ENCODE measurements at regions of chr6 and their contacts with region 1.

Region 1: DNA sequence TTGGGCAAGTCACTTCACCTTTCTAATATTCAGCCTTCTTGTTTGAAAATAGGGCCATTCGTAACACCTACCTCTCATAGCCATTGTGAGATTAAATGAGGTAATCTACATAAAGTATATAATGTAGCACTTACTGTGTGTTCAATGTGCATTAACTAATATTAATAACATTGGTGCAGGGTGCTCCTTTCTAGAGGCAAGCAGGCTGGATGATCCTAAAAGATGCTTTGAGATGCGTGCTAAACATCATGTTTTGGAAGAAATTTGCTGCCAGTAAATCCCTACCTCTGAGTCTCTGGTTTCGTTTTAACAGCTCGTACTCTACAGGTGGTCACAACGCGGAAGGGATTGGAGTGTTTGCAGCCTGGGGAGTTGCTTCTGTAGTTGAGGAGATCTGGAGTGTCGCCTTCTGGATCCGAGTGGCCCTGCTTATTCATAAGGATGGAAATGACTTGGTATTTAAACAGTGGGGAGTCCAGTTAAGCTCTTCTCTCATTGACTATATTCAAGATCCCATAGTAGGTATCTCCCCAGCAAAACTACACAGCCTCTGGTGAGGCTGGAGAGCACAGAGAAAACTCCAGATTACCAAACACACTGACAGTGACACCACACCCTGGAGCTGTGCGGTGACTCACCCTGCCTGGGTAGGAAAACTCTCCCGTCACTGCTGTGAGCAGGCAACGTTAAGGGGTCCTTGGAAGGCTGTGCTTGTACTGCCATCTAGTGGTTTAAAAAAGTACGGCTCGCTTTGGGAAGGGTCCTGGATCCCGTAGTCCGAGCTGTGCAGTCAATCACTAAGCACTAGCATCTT is 107.9 kb downstream of the MAP3K7 start:
- DNase-seq: peak; percentile 76
- H3K4me3 Mint-ChIP-seq: peak overlapping the region; percentile 3
- H3K27ac Mint-ChIP-seq: peak overlapping the region; percentile 85
- H3K4me1 Mint-ChIP-seq: peaks cover 56% of the 10 kb centered on the region
- H3K27me3 Mint-ChIP-seq: peaks cover 2% of the 10 kb centered on the region

Region 2: DNA sequence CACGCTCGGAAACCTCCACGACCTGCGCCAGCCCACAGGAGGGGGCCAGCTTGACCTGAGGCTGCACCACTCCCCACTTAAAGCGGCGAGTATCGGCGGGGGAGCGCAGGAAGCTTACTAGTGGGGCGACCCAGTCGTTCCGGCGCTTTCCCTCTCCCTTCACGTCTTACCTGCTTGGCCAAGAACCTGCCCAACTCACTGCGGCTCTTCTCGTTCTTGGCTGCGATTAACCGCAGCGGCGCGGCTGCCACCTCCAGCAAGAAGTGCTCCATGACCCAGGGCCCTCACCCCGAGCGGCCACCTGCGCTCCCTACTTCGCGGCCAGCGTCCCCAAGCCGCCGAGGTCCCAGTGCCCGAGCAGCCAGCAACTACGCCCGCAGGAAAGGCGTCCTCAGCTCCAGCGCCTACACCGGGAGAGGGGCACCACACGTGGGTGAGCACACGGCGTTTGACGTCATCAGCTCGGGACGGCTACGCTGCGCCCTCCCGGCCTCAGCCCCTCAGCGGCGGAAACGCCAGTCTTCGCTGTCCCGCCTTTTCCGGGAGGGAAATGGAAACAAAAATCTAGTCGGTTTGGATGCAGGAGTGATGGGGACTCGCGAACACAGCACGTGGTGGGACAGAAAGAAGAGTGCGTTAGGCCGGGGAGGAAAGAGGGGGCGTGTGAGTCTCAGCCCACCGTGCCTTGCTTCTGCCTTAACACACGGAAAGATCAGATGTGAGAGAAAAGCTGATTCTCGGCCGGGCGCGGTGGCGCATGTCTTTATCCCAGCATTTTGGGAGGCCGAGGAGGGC is 659.5 kb before region 1 on chr6 and contains the start of gene MDN1:
- intact Hi-C with region 1: loop called (anchors 5 kb)
- DNase-seq: peak; percentile 89
- H3K4me3 Mint-ChIP-seq: peak within 1 kb of the TSS; percentile 87
- H3K27ac Mint-ChIP-seq: peak within 1 kb of the TSS; percentile 97
- H3K4me1 Mint-ChIP-seq: peaks cover 33% of the 10 kb centered on the region
- H3K27me3 Mint-ChIP-seq: no peaks in the 10 kb centered on the region
- total RNA-seq, gene MDN1: 74.6 and 77.9 TPM in 2 replicates

Region 3: DNA sequence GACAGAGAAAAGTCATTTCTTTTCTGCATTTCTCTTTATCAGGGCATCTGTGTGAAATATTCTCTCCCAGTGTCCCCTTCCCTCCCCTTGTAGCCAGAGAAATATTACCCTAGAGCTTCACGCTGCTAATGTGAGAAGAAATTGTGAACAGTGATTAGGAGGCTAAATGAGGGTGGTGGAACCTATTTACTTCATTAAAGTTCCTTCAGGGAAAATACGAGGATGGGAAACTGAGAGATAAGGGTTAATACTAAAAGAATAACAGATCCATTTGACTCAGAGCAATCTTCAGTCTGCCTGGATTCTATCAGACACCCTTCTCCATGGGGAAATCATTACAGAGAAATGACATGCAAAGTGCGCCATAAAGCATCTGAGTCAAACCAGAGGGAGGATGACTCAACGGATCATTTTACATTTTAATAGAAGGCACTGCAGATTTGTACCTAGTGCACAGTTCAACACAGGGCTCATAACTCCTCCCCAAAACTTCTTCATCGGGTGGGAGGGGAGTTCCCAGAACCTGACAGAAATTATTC is 453.4 kb before region 1 on chr6:
- intact Hi-C with region 1: loop called (anchors 5 kb)
- DNase-seq: no peak
- H3K4me3 Mint-ChIP-seq: peak overlapping the region; percentile 69
- H3K27ac Mint-ChIP-seq: peak overlapping the region; percentile 95
- H3K4me1 Mint-ChIP-seq: peaks cover 77% of the 10 kb centered on the region
- H3K27me3 Mint-ChIP-seq: no peaks in the 10 kb centered on the region

Region 4: DNA sequence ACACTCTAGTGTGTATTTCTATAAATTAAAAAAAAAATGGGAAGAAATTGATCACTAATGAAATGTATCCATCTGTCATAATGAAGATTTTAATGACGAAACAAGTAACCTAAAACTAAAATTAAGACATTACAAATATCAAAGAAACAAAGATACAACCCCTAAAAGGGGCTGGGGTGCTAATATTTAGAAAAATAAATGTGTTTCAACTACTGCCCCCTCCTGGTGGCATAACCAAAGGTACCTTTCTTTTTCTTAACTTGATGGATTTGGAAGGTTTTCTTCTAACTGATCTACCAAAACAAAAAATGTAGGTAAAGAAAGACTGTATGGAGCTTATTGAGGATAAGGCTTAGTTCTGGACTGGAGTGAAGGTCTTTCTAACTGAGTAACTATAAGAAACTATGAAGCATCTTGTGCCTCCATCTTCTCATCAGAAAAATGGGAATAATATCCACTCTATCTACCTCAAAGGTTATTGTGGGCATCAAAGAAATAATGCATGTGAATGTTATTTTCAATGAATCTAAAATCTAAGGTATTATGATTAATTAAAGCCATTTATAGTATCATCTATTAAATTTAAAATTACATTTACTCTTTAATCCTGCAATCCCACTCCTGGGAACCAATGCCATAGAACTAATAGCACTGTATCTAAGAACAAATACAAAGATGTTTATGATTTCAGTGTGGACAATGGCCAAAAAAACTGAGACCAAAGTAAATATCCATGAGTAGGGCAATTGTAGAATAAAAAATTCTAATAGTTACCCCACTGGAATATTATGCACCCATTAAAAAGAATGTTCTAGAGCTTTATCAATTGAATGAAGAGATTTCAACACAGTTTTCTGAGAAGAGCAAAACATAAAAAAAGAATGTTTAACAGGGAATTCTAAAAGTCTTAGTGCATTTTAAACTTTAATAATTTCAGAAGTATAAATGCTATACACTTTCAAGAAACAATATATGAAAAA is 299.5 kb before region 1 on chr6:
- intact Hi-C with region 1: loop called (anchors 1 kb)
- DNase-seq: no peak
- H3K4me3 Mint-ChIP-seq: no peak overlapping the region
- H3K27ac Mint-ChIP-seq: no peak overlapping the region
- H3K4me1 Mint-ChIP-seq: peaks cover 69% of the 10 kb centered on the region
- H3K27me3 Mint-ChIP-seq: no peaks in the 10 kb centered on the region

Region 5: DNA sequence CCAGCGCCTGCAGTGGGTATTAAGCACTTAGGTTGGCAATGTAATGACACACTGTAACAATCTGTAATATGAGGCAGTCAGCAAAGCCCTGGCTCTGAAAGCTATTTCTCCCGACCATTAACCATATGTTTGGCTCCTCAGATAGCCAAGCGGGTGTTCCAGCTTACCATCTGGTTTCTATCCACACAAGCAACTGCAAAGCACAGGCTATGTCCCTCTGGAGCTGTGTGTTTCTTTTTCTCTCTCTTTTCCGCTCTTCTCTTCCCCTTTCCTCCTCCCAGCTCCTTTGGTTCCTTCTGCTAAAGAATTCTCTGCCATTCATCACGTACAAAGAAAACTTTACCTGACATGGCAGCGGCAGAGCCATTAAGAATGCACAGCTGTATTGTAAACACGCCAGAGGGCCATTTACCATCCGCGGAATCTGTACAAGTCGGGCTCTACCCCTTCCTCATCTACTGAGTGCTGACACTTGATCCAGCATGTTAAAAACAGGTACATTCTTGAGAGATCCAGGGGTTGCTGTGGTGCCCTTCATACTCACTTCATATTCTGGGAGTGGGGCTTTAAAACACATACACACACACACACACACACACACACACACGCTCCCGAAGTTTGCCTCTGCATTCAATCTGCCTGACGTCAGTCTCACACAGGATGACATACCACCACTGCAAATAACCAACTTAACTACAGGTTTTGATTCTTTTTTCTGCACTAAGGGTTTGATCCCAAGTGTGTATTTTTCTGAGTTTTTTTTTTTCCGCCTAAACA is 259.6 kb before region 1 on chr6:
- intact Hi-C with region 1: loop called (anchors 1 kb)
- DNase-seq: no peak
- H3K4me3 Mint-ChIP-seq: no peak overlapping the region
- H3K27ac Mint-ChIP-seq: no peak overlapping the region
- H3K4me1 Mint-ChIP-seq: no peaks in the 10 kb centered on the region
- H3K27me3 Mint-ChIP-seq: no peaks in the 10 kb centered on the region

Region 6: GRCh38 chr6:90411292-90411781 is 67.7 kb before region 1 on chr6:
- intact Hi-C with region 1: loop called (anchors 1 kb)
- DNase-seq: peak; percentile 59
- H3K4me3 Mint-ChIP-seq: no peak overlapping the region
- H3K27ac Mint-ChIP-seq: peak overlapping the region; percentile 75
- H3K4me1 Mint-ChIP-seq: peaks cover 81% of the 10 kb centered on the region
- H3K27me3 Mint-ChIP-seq: no peaks in the 10 kb centered on the region

Region 7: GRCh38 chr6:90730151-90730673 is 251.2 kb after region 1 on chr6:
- intact Hi-C with region 1: no loop called
- DNase-seq: no peak
- H3K4me3 Mint-ChIP-seq: no peak overlapping the region
- H3K27ac Mint-ChIP-seq: no peak overlapping the region
- H3K4me1 Mint-ChIP-seq: no peaks in the 10 kb centered on the region
- H3K27me3 Mint-ChIP-seq: peaks cover 2% of the 10 kb centered on the region

Measured in activated T-helper 1 cell treated with anti-CD3 and anti-CD28 coated beads, Interleukin-12 subunit alpha, Interleukin-12 subunit beta, Interleukin-2, Interleukin-4 antibody, amounts not matched to agents 30 ng/mL and 10 ng/mL and 1 ng/mL, durations not matched to agents 14 hours and 24 hours and 36 hours (primary cell).